CD14-positive monocyte (primary cell): ENCODE measurements at regions of chr15 and their contacts with region 1.

Region 1: DNA sequence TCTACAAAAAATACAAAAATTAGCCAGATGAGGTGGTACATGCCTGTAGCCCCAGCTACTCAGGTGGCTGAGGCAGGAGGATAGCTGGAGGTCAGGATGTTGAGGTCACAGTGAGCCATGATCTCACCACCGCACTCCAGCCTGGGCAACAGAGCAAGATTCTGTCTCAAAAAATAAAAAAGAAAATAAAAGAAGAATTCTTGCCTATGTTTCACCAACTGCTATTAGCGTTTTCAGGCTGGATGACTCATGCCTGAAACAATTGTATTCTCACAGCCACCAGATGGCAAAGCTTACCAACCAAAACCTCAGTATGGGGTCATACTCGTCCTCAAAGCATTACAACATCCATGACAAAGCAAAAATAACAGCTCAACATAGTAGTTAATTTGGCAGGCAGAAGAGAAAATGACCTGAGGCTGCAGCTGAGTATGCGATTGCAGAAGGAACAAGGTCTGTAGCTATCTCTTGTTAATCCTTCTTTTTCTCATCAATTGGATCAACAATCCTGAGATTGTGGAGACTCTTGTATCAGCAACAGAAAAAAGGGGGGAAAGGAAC is 52.2 kb downstream of the TP53BP1 start:
- DNase-seq: peak; percentile 83 to 92 (median 92)
- H3K4me3 ChIP-seq: peak overlapping the region in 1 of 3 experiments; percentile 34
- H3K4me3 Mint-ChIP-seq: peak overlapping the region in 1 of 2 donors; percentile 66
- H3K27ac ChIP-seq: peak overlapping the region; percentile 37 to 64
- H3K27ac Mint-ChIP-seq: peak overlapping the region; percentile 68 to 92 (median 84)
- H3K4me1 ChIP-seq: peaks cover 10 to 11% of the 10 kb centered on the region in 2 donors
- H3K4me1 Mint-ChIP-seq: peaks cover 6% of the 10 kb centered on the region
- H3K27me3 ChIP-seq: no peaks in the 10 kb centered on the region
- H3K27me3 Mint-ChIP-seq: no peaks in the 10 kb centered on the region
- CTCF ChIP-seq: peak; percentile 74

Region 2: DNA sequence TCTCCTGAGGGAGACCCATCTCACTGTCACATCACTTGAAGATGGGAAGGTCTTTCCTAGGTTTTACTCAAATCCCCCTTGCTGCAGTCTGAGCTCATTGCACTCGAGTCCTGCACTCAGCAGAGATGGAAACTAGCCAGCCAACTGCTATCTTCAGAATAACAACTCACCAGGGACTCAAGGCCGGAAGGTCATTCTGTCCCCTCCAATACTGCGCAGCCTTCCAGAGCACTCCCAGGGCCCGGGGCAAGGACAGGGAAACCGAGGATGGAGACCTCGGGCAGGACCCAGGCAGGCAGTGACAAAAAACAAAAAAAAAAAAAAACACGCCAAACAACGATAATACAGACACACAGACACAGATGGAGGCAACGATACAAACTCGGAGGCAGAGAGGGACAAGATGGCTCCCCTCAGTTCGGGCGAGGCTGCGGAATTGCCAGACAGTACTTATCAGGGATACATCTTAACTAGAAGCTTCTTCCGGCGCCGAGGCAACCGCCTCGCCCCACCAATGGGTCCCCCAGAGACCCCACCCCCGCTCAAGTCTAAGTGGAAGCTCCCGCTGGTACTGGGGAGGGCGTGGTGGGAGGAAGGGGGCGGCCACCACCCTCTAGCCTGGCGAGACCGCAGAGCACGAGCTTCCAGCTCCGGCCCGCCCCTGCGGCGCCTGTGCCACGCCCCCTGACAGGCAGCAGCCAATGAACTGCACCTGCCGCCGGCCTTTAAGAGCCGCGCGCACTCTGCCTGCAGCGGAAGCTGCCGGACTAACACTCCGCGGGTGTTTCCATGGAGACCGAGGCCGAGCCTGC is 69.6 kb after region 1 on chr15:
- intact Hi-C with region 1: loop called in 1 of 2 experiments (anchors 10 kb)
- DNase-seq: peak; percentile 97 to 100 (median 99)
- H3K4me3 ChIP-seq: peak overlapping the region; percentile 59 to 97 (median 78)
- H3K4me3 Mint-ChIP-seq: peak overlapping the region; percentile 90 to 91
- H3K27ac ChIP-seq: peak overlapping the region in 1 of 2 donors; percentile 77
- H3K27ac Mint-ChIP-seq: peak overlapping the region; percentile 18 to 94 (median 86)
- H3K4me1 ChIP-seq: peaks cover 11 to 13% of the 10 kb centered on the region in 2 donors
- H3K4me1 Mint-ChIP-seq: peaks cover 18% of the 10 kb centered on the region
- H3K27me3 ChIP-seq: peaks cover 9 to 11% of the 10 kb centered on the region in 2 donors
- H3K27me3 Mint-ChIP-seq: peaks cover 14 to 18% (median 15%) of the 10 kb centered on the region in 3 donors
- CTCF ChIP-seq: no peak

Region 3: DNA sequence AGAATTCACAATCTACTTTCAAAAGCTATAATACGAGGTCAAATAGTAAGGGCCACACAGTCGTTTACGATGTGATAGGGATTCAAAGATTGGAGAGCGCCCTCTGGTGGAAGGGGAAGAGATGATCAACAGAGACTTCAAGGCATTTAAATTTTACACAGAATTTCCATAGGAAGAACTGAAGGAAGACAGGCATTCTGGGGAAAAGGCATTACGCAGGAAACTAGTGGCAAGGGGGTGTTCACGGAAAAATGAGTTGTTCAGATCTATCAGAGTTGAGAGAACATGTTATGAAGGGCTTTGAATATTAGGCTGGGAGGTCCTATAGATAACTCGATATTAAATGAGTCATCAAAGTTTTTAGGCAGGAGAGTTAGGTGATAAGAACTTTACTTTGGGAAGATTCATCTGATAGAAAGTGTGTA is 625.5 kb after region 1 on chr15:
- intact Hi-C with region 1: loop called in 1 of 2 experiments (anchors 10 kb)
- DNase-seq: peak; percentile 20 to 44 (median 27)
- H3K4me3 ChIP-seq: no peak overlapping the region
- H3K4me3 Mint-ChIP-seq: no peak overlapping the region
- H3K27ac ChIP-seq: no peak overlapping the region
- H3K27ac Mint-ChIP-seq: no peak overlapping the region
- H3K4me1 ChIP-seq: no peaks in the 10 kb centered on the region
- H3K4me1 Mint-ChIP-seq: no peaks in the 10 kb centered on the region
- H3K27me3 ChIP-seq: peaks cover 7% of the 10 kb centered on the region in 2 donors
- H3K27me3 Mint-ChIP-seq: peaks cover 6 to 18% (median 8%) of the 10 kb centered on the region in 3 donors
- CTCF ChIP-seq: peak; percentile 93